ENCODE measurements at regions of chr14 and their contacts with region 1.

Region 1: DNA sequence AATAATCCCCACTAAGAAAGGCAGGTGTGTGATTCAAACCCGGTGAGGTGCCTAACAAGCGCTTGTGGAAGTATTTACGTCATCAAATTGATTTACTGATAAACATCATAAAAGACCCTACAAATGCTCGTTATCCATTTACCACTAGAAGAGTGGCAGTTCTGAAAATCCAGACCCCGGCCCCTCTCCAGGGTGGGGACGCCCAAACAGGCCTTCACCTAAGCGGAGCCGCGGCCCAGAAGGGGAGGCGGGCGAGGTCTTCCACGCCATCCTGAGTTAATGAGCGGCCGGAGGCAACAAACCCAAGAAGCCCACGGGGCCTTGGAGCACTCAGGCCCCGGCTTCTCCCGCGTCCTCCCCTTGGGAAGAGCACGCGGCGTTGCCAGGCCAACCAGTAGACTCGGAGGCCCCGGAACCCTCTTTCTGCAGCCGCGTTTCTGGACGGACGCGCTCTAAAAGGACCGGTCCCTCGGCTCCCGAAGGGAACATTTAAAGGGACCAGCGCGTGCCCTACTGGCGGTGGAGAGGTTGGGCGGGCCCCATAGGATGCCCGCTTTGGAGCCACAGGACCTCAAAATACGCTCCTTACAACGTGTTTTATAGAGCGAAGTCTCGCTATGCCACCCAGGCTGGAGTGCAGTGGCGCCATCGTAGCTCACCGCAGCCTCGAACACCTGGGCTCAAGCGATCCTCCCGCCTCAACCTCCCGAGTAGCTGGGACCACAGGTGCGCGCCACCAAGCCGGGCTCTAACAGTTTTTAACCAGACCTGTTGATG is 3.5 kb downstream of the PTPN21 start:
- DNase-seq: peak; percentile 82
- H3K4me3 ChIP-seq: peak overlapping the region; percentile 75 to 100 (median 82)
- H3K27ac ChIP-seq: peak overlapping the region; percentile 50
- H3K4me1 ChIP-seq: peaks cover 14% of the 10 kb centered on the region
- H3K27me3 ChIP-seq: no peaks in the 10 kb centered on the region
- CTCF ChIP-seq: peak in 1 of 2 donors; percentile 46

Region 2: GRCh38 chr14:88289234-88289633 is 262.0 kb before region 1 on chr14:
- CTCF ChIA-PET with region 1: no interaction called
- dilution Hi-C with region 1: no loop called
- in situ Hi-C with region 1: no loop called
- intact Hi-C with region 1: loop called (anchors 10 kb)
- DNase-seq: peak; percentile 65
- H3K4me3 ChIP-seq: no peak overlapping the region
- H3K27ac ChIP-seq: no peak overlapping the region
- H3K4me1 ChIP-seq: no peaks in the 10 kb centered on the region
- H3K27me3 ChIP-seq: no peaks in the 10 kb centered on the region
- CTCF ChIP-seq: no peak

Region 3: GRCh38 chr14:88492272-88493089 is 58.8 kb before region 1 on chr14:
- CTCF ChIA-PET with region 1: no interaction called
- dilution Hi-C with region 1: no loop called
- in situ Hi-C with region 1: no loop called
- intact Hi-C with region 1: loop called (anchors 2 kb)
- DNase-seq: peak; percentile 49
- H3K4me3 ChIP-seq: no peak overlapping the region
- H3K27ac ChIP-seq: no peak overlapping the region
- H3K4me1 ChIP-seq: peaks cover 13% of the 10 kb centered on the region
- H3K27me3 ChIP-seq: no peaks in the 10 kb centered on the region
- CTCF ChIP-seq: peak; percentile 84 to 88

Region 4: GRCh38 chr14:89013084-89013504 is 461.8 kb after region 1 on chr14:
- CTCF ChIA-PET with region 1: no interaction called
- dilution Hi-C with region 1: no loop called
- in situ Hi-C with region 1: no loop called
- intact Hi-C with region 1: loop called (anchors 10 kb)
- DNase-seq: no peak
- H3K4me3 ChIP-seq: no peak overlapping the region
- H3K27ac ChIP-seq: no peak overlapping the region
- H3K4me1 ChIP-seq: no peaks in the 10 kb centered on the region
- H3K27me3 ChIP-seq: no peaks in the 10 kb centered on the region
- CTCF ChIP-seq: peak; percentile 15 to 48

Measured in mammary epithelial cell (primary cell).